K562 (cell line): ENCODE measurements at regions of chrX and their contacts with region 1.

Region 1: GRCh38 chrX:149898554-149898953 is 17.6 kb downstream of the MAGEA8 start:
- DNase-seq: no peak
- ATAC-seq: no peak; the same call in 2 of the 3 replicates
- H3K4me3 ChIP-seq: no peak overlapping the region
- H3K27ac ChIP-seq: no peak overlapping the region
- H3K4me1 ChIP-seq: peaks cover 0 to 2% of the 10 kb centered on the region in 2 experiments; a peak in 2 of 5 replicates
- H3K27me3 ChIP-seq: no peaks in the 10 kb centered on the region
- CTCF ChIP-seq: no peak
- EP300 ChIP-seq: no peak
- POLR2A ChIP-seq: no peak
- RAD21 ChIP-seq: no peak

Region 2: DNA sequence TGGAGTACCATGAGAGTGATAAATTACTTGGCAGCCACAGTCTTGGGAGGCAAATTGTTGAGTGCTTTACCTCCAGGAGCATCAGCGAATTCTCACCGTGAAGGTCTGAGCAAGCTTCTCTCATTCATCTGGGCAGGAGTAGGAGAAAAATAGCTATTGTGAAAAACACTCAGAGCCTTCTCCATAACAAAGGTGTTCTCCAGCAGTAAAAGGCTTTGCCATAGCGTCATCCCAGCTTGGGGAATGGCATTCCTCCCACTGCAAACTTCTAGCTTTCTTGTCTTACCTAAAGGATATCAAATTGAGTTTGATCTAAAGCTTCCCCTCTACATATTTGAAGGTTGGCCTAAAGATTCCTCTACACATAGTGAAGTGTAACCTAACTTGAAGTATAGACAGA is 216.5 kb before region 1 on chrX:
- CTCF ChIA-PET with region 1: no interaction called
- POLR2A ChIA-PET with region 1: no interaction called
- in situ Hi-C with region 1: no loop called
- intact Hi-C with region 1: no loop called
- DNase-seq: no peak
- ATAC-seq: no peak
- H3K4me3 ChIP-seq: no peak overlapping the region
- H3K27ac ChIP-seq: no peak overlapping the region
- H3K4me1 ChIP-seq: no peaks in the 10 kb centered on the region
- H3K27me3 ChIP-seq: peaks cover 0 to 4% of the 10 kb centered on the region in 2 experiments; a peak in 1 of 5 replicates
- CTCF ChIP-seq: no peak
- EP300 ChIP-seq: no peak
- POLR2A ChIP-seq: no peak
- RAD21 ChIP-seq: no peak

Region 3: DNA sequence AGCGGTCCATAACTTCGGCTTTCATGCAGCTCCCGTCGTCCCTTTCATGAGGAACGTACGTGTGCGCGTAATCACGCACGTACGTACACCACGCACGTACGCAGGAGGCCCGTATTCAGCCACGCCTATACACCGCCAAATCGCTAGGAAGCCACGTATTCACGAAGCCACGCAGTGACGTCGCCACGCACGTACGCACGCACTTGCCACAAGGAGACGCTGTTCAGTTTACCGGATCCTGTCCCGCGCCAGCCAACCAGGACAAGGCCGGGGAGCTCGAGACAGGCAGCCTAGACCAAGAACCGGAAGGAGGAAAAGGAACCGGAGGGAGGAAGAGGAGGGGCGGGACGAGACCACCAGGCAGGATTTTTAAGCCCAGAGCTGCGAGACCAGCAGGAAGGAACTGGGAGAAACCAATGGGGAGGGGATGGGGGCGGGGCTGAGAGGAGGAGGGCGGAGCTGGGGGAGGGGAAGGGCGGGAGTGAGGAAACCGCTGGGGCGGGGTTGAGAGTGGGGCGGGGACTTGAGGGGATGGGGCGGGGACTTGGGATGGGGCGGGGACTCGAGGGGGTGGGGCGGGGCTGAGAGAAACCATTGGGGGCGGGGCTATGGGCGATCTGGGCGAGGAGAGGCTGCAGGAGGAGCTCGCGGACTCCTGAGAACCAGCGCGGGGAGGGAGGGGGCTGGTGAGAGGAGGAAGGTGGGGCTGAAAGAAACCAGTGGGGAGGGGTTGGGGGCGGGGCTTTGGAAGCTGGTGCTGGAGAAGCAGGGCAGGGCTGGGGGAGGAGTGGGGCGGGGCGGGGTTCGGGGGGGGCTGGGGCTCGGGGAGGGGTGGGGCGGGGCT is 40.1 kb after region 1 on chrX and contains the start of gene EOLA2:
- CTCF ChIA-PET with region 1: no interaction called
- POLR2A ChIA-PET with region 1: no interaction called
- in situ Hi-C with region 1: no loop called
- intact Hi-C with region 1: loop called (anchors 5 kb)
- DNase-seq: peak; percentile 63 to 97 (median 72)
- ATAC-seq: peak; percentile 79
- H3K4me3 ChIP-seq: peak within 1 kb of the TSS; percentile 95
- H3K27ac ChIP-seq: peak within 1 kb of the TSS; percentile 96
- H3K4me1 ChIP-seq: peaks cover 0 to 15% of the 10 kb centered on the region in 2 experiments; a peak in 2 of 5 replicates
- H3K27me3 ChIP-seq: no peaks in the 10 kb centered on the region
- CTCF ChIP-seq: peak; percentile 67 to 89 (median 85)
- EP300 ChIP-seq: no peak
- POLR2A ChIP-seq: peak; percentile 75
- RAD21 ChIP-seq: no peak
- polyA plus RNA-seq, gene EOLA2: 33.7 to 44.1 TPM